ENCODE measurements at regions of chr17 and their contacts with region 1.

Region 1: GRCh38 chr17:45428050-45428617 is 4.5 kb downstream of the ARHGAP27 start:
- DNase-seq: peak; percentile 42
- ATAC-seq: peak; percentile 78
- H3K4me3 ChIP-seq: no peak overlapping the region
- H3K27ac ChIP-seq: no peak overlapping the region
- H3K4me1 ChIP-seq: peaks cover 6% of the 10 kb centered on the region; the same call in 1 of the 2 replicates
- H3K27me3 ChIP-seq: peaks cover 52% of the 10 kb centered on the region
- CTCF ChIP-seq: peak; percentile 86
- POLR2A ChIP-seq: no peak
- RAD21 ChIP-seq: peak; percentile 75

Region 2: GRCh38 chr17:45293413-45294211 is 134.5 kb before region 1 on chr17:
- CTCF ChIA-PET with region 1: no interaction called
- POLR2A ChIA-PET with region 1: no interaction called
- dilution Hi-C with region 1: no loop called
- in situ Hi-C with region 1: no loop called
- intact Hi-C with region 1: no loop called
- DNase-seq: peak; percentile 91
- ATAC-seq: peak; percentile 83
- H3K4me3 ChIP-seq: no peak overlapping the region
- H3K27ac ChIP-seq: peak overlapping the region; percentile 35
- H3K4me1 ChIP-seq: peaks cover 38% of the 10 kb centered on the region
- H3K27me3 ChIP-seq: no peaks in the 10 kb centered on the region
- CTCF ChIP-seq: peak; percentile 32; the same call in 1 of the 2 replicates
- POLR2A ChIP-seq: no peak
- RAD21 ChIP-seq: peak; percentile 29

Region 3: DNA sequence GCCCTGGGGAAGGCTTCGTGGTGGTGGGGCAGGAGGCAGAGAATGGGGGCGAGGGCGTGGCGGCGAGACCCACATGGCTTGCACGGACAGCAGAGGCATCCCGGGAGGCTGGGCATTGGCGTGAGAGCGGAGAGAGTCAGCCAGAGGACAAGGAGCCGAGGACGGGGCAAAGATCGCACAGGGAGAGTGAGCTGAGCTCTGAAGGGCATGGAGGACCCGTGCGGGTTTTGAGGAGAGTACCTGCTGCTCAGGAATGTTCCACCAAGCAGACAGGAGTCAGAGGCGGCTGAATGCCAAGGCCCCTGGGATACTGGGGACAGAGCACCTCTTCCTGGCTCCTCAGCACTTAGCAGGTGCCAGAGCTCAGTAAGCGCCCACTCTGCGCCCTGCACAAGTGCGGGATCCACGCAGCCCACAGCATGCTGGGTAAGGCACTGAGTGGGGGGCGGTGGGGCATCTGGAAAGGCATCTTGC is 43.3 kb before region 1 on chr17:
- CTCF ChIA-PET with region 1: no interaction called
- POLR2A ChIA-PET with region 1: no interaction called
- dilution Hi-C with region 1: no loop called
- in situ Hi-C with region 1: no loop called
- intact Hi-C with region 1: no loop called
- DNase-seq: no peak
- ATAC-seq: no peak
- H3K4me3 ChIP-seq: no peak overlapping the region
- H3K27ac ChIP-seq: no peak overlapping the region
- H3K4me1 ChIP-seq: peaks cover 5% of the 10 kb centered on the region; the same call in 1 of the 2 replicates
- H3K27me3 ChIP-seq: peaks cover 9% of the 10 kb centered on the region; the same call in 1 of the 2 replicates
- CTCF ChIP-seq: no peak
- POLR2A ChIP-seq: no peak
- RAD21 ChIP-seq: no peak

Region 4: DNA sequence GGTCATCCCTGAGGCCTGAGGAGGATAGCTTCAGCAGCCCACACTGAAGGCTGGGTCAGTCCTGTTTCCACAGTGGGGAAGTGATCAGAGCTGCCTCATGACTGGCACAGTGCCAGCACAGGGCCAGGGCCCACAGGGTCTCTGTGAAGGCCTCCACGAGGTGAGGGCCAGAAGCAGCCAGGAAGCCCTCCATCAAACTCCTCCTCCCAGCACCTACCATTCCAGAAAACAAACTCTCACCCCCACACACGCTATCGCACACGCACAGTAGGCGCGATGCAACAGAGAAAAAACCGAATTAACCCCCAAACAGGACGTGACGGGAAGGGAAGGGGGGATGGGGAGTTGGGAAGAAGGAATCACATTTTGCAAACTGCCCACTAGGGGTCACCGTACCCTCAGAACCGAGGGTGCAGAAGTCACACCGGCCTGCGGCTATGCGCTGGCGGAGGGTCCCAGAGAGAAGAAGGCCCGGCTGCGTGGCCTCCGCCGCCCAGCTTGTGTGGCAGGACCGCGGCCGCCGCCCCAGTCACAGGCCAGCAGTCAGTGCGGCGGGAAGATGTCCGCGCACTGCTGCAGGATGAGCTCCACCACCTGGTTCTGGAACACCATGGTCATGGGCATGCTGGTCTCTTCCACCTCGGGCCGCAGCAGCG is 33.1 kb before region 1 on chr17:
- CTCF ChIA-PET with region 1: interaction called, 3 read pairs
- POLR2A ChIA-PET with region 1: no interaction called
- dilution Hi-C with region 1: no loop called
- in situ Hi-C with region 1: no loop called
- intact Hi-C with region 1: loop called (anchors 1 kb)
- DNase-seq: peak; percentile 90
- ATAC-seq: peak; percentile 97
- H3K4me3 ChIP-seq: no peak overlapping the region
- H3K27ac ChIP-seq: no peak overlapping the region; the same call in 1 of the 2 replicates
- H3K4me1 ChIP-seq: peaks cover 5% of the 10 kb centered on the region
- H3K27me3 ChIP-seq: peaks cover 7% of the 10 kb centered on the region; the same call in 1 of the 2 replicates
- CTCF ChIP-seq: peak; percentile 89
- POLR2A ChIP-seq: no peak
- RAD21 ChIP-seq: peak; percentile 81

Region 5: GRCh38 chr17:45852535-45853297 is 424.6 kb after region 1 on chr17:
- CTCF ChIA-PET with region 1: no interaction called
- POLR2A ChIA-PET with region 1: no interaction called
- dilution Hi-C with region 1: no loop called
- in situ Hi-C with region 1: loop called (anchors 25 kb)
- intact Hi-C with region 1: loop called (anchors 10 kb)
- DNase-seq: peak; percentile 55
- ATAC-seq: peak; percentile 82
- H3K4me3 ChIP-seq: no peak overlapping the region
- H3K27ac ChIP-seq: no peak overlapping the region
- H3K4me1 ChIP-seq: no peaks in the 10 kb centered on the region
- H3K27me3 ChIP-seq: peaks cover 7% of the 10 kb centered on the region; the same call in 1 of the 2 replicates
- CTCF ChIP-seq: peak; percentile 89
- POLR2A ChIP-seq: no peak
- RAD21 ChIP-seq: peak; percentile 74

Measured in IMR-90 (cell line).